WTC11 (cell line): ENCODE measurements at regions of chr14 and their contacts with region 1.

Region 1: GRCh38 chr14:20855652-20856291 is 35.4 kb upstream of the RNASE3 start:
- DNase-seq: peak; percentile 66
- ATAC-seq: peak; percentile 90
- H3K4me3 Mint-ChIP-seq: no peak overlapping the region
- H3K27ac Mint-ChIP-seq: no peak overlapping the region
- H3K4me1 Mint-ChIP-seq: peaks cover 12% of the 10 kb centered on the region
- H3K27me3 Mint-ChIP-seq: peaks cover 2% of the 10 kb centered on the region; the same call in 1 of the 2 replicates
- CTCF ChIP-seq: no peak

Region 2: DNA sequence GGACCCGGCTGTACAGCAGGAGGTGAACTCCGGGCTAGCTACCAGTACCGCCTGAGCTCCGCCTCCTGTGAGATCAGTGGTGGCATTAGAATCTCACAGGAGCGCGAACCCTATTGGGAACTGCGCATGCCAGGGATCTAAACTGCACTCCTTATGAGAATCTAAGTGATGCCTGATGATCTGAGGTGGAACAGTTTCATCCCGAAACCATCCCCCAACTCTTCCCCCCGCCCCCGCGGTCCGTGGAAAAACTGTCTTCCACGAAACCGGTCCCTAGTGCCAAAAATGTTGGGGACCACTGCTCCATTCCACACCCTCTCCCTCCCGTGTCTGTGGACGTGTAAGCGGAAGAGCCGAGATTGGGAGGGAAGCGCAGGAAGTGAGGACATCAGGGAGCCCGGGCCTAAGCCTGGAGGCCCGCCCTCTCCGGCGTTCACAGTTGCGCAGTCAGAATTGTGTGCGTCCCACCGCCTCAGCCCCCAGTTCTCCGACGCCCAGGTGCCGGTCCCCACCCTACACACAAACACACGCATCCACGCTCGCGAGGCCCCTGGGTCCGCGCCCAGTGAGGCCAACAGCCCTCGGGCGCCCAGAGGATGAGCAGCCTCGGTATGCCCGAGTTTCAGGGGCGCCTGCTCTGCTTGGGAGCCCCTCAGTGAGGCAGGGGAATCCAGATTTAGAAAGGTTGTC is 173.2 kb before region 1 on chr14:
- CTCF ChIA-PET with region 1: interaction called, 13 read pairs
- POLR2A ChIA-PET with region 1: no interaction called
- DNase-seq: peak; percentile 73
- ATAC-seq: peak; percentile 38
- H3K4me3 Mint-ChIP-seq: no peak overlapping the region
- H3K27ac Mint-ChIP-seq: no peak overlapping the region
- H3K4me1 Mint-ChIP-seq: peaks cover 25% of the 10 kb centered on the region
- H3K27me3 Mint-ChIP-seq: peaks cover 10% of the 10 kb centered on the region
- CTCF ChIP-seq: no peak

Region 3: GRCh38 chr14:20732979-20733635 is 122.7 kb before region 1 on chr14:
- CTCF ChIA-PET with region 1: interaction called, 10 read pairs
- POLR2A ChIA-PET with region 1: no interaction called
- DNase-seq: no peak
- ATAC-seq: peak; percentile 26; the same call in 1 of the 2 replicates
- H3K4me3 Mint-ChIP-seq: no peak overlapping the region
- H3K27ac Mint-ChIP-seq: no peak overlapping the region
- H3K4me1 Mint-ChIP-seq: peaks cover 16% of the 10 kb centered on the region
- H3K27me3 Mint-ChIP-seq: no peaks in the 10 kb centered on the region; the same call in 1 of the 2 replicates
- CTCF ChIP-seq: no peak

Region 4: DNA sequence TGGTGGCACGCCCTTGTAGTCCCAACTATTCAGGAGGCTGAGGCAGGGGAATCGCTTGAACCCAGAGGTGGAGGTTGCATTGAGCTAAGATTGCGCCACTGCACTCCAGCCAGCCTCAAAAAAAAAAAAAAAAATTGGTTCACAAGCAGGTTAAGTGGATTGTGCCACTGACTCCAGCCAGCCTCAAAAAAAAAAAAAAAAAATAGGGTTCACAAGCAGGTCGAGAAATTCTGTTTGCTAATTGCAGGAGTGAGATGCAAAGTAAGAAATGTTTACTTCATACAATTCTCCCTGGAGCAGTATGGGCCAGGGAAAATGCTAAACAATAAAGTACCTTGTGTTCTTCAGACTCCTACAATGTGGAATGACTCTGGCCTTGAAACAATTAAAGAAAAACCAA is 81.4 kb before region 1 on chr14:
- CTCF ChIA-PET with region 1: interaction called, 12 read pairs
- POLR2A ChIA-PET with region 1: no interaction called
- DNase-seq: no peak
- ATAC-seq: no peak
- H3K4me3 Mint-ChIP-seq: peak overlapping the region; percentile 56
- H3K27ac Mint-ChIP-seq: peak overlapping the region; percentile 99
- H3K4me1 Mint-ChIP-seq: peaks cover 70% of the 10 kb centered on the region
- H3K27me3 Mint-ChIP-seq: peaks cover 8% of the 10 kb centered on the region
- CTCF ChIP-seq: no peak

Region 5: DNA sequence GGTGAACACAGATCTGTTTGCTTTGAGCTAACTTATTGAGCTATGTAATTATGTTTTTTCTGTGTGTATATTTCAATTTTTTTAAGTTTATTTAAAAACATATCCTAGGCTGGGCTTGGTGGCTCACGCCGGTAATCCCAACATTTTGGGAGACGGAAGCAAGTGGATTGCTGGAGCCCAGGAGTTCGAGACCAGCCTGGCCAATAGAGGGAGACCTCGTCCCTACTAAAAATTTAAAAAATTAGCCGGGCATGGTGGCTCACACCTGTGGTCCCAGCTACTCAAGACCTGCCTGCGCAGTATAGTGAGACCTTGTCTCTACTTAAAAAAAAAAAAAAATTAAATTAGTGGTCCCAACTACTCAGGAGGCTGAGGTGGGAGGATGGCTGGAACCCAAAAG is 36.9 kb before region 1 on chr14:
- CTCF ChIA-PET with region 1: interaction called, 16 read pairs
- POLR2A ChIA-PET with region 1: no interaction called
- DNase-seq: peak; percentile 36
- ATAC-seq: peak; percentile 50
- H3K4me3 Mint-ChIP-seq: no peak overlapping the region
- H3K27ac Mint-ChIP-seq: no peak overlapping the region
- H3K4me1 Mint-ChIP-seq: peaks cover 53% of the 10 kb centered on the region
- H3K27me3 Mint-ChIP-seq: no peaks in the 10 kb centered on the region
- CTCF ChIP-seq: no peak

Region 6: GRCh38 chr14:20873370-20874177 is 17.8 kb after region 1 on chr14:
- CTCF ChIA-PET with region 1: interaction called, 56 read pairs
- POLR2A ChIA-PET with region 1: no interaction called
- DNase-seq: peak; percentile 95
- ATAC-seq: peak; percentile 98
- H3K4me3 Mint-ChIP-seq: peak overlapping the region; percentile 58
- H3K27ac Mint-ChIP-seq: peak overlapping the region; percentile 49; the same call in 1 of the 2 replicates
- H3K4me1 Mint-ChIP-seq: peaks cover 9% of the 10 kb centered on the region
- H3K27me3 Mint-ChIP-seq: peaks cover 48% of the 10 kb centered on the region
- CTCF ChIP-seq: peak; percentile 74